Mucosa of descending colon (tissue), 3 donors: ENCODE measurements at regions of chr10 and their contacts with region 1.

Region 1: DNA sequence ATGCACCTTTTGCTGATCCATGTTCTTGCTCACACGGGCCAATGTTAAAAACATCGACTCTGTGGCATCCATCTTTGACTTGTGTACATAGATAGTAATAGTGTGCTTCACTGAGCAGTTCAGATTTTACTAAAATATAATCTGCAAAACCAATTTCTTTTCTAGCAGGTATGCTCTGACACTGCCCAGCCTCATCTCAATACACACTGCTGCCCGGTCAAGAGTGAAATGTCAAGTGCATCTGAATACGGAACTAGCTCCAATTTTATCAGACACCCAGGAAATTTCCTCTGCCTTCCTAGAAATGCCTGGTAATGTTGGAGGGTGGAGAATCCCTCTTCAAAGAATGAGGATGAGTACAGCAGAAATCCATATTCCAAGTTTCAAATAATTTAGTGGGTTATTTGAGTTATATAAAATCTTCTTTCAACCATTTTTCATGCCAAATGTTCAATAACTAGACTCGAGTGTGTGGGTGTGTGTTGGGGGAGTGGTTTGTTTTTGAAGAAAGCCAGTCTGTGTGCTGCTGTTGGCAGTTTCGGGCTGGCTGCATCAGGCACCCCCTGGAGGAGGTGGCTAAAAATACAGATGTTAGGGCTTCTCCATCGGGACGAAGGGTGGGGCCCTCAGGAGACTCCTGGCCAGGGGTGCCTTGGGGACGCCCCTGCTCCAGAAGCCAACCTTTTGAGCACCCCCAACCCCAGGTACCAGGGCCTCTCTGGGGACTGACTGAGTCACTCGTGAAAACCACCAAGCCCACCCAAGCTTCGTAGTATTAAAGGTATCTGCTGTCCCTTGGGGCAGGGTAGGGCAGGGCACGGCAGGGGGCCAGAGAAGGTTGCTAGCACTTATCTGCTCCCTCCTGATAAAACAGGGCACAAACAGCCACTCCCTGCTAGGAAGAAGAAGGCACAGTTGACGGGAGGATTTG is 15.4 kb downstream of the CTBP2 start:
- DNase-seq: peak in 1 of 3 donors; percentile 60
- ATAC-seq: peak; percentile 40
- H3K4me3 ChIP-seq: no peak overlapping the region
- H3K4me1 ChIP-seq: peaks cover 33% of the 10 kb centered on the region
- CTCF ChIP-seq: no peak

Region 2: DNA sequence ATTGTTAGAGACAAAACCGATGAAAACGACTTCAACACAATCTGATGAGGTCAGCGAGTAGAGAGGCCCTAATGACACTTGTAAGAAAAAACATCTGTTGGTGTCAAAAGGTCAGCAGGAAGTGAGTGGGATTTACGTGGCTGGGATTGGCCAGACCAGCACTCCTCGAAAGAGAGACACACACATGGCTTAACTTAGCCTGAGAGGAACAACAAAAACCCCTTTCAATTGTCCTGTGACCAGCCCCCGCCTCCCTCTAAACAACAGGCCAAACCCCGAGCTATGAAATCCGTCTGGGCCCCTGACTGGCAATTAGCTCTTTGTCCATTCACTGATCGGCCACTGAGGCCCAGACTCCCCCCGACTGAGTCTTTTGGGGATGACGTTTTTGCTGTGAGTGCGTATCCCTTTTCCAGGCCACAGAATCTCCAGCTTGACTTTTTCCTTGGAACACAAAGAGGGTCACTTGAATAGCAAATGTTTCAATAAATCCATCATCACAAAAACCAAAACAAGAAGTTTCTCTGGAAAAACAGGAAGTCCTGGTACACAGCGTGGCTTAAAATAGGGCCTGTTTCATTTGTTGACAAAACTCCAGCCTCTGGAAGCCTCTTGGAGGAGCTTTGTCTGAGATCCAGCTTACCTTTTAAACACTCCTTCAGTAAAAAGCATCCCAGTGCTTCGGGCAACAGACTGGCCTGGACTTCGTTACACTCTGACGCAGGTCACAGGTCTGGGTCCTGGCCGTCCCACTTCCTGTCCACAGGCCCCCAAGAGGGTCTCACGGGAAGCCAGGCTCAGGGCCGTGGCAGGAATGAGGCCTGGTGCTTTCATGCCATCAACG is 87.6 kb before region 1 on chr10:
- intact Hi-C with region 1: loop called in 1 of 2 experiments (anchors 10 kb)
- DNase-seq: peak in 1 of 3 donors; percentile 65
- ATAC-seq: peak; percentile 39
- H3K4me3 ChIP-seq: no peak overlapping the region
- H3K4me1 ChIP-seq: peaks cover 55% of the 10 kb centered on the region
- CTCF ChIP-seq: no peak